AG04449 (cell line): ENCODE measurements at regions of chr14 and their contacts with region 1.

Region 1: GRCh38 chr14:92625213-92625612 is 111.6 kb downstream of the RIN3 start:
- DNase-seq: peak; percentile 86
- H3K4me3 ChIP-seq: no peak overlapping the region
- CTCF ChIP-seq: no peak

Region 2: DNA sequence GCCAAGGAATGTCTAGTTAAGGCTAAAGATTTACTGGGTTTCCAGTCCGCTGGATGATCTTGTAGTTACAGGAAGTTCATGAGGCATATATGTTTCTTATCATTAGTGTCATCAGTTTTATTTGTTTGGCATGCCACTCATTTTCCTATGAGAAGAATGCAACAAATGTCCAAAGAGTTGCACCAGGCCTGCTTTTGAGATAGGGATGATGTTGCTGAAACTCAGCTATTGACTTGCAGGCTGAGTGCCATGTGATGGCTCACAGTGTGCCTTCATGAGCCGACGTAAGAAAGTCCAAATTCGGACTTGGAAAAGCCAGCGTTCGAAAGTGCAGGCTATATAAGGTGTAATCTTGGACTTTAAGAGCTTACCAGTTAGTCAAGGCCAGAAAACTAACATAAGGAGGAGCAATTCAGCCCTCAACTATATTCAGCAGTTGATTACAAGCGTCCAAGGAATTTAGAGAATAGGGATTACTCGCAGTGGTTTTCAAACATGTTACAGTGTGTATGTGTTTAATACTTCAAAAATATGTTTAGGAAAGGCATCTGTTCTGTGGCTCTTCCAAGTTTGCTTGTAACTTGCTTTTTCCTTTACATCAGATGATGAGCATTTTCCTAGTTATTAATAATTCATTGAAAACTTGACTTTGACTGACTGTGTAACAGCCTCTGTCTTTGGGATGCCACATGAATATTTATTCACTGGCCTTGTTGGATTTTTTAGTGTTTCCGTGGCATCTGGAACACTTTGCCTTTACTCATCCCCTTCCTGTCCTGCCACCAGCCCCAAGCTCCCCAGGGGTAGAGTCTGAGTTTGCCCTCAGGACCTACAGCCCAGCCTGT is 22.0 kb after region 1 on chr14:
- CTCF ChIA-PET with region 1: no interaction called
- POLR2A ChIA-PET with region 1: interaction called, 14 read pairs
- DNase-seq: peak; percentile 98
- H3K4me3 ChIP-seq: no peak overlapping the region
- CTCF ChIP-seq: no peak

Region 3: GRCh38 chr14:92800012-92800411 is 174.8 kb after region 1 on chr14:
- CTCF ChIA-PET with region 1: no interaction called
- POLR2A ChIA-PET with region 1: no interaction called
- DNase-seq: no peak
- H3K4me3 ChIP-seq: no peak overlapping the region
- CTCF ChIP-seq: no peak